K562 (cell line): ENCODE measurements at regions of chr19 and their contacts with region 1.

Region 1: DNA sequence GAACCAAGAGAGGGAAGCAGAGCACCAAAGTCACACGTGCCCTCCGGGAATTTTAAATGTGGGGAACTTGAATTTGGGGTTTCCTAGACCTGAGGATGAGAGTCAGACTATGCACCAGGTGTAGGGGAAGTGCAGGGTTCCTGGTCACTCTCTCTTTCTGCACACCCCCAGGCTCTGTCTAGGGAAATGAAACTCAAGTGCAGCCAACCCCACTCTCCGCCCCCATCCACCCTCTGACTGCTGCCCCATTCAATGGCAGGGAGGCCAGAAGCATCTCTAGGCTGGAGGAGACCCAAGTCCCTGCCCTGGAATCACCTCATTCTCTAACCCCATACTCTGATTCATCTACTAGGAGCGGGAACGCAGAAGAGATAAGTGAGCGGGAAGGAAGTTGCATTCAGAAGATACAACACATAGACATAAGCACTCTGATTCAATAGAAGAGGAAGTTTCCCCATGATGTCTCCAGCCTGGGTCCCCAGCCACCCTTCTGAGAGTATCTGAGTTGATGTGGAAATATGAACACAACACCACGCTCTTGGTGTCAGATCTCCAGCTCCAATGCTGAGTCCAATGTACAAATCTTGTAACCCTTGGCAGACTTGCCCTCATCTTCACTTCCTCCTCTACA is 4.7 kb upstream of the SIGLEC14 start:
- DNase-seq: peak in 1 of 4 experiments; percentile 17
- ATAC-seq: no peak
- H3K4me3 ChIP-seq: no peak overlapping the region
- H3K27ac ChIP-seq: no peak overlapping the region
- H3K4me1 ChIP-seq: peaks cover 0 to 7% of the 10 kb centered on the region in 2 experiments; a peak in 3 of 5 replicates
- H3K27me3 ChIP-seq: peaks cover 9 to 20% of the 10 kb centered on the region in 2 experiments; a peak in 3 of 5 replicates
- CTCF ChIP-seq: no peak
- EP300 ChIP-seq: no peak
- POLR2A ChIP-seq: no peak
- RAD21 ChIP-seq: no peak

Region 2: GRCh38 chr19:51422053-51422448 is 229.3 kb before region 1 on chr19:
- CTCF ChIA-PET with region 1: interaction called, 30 read pairs
- POLR2A ChIA-PET with region 1: no interaction called
- in situ Hi-C with region 1: loop called (anchors 5 kb)
- intact Hi-C with region 1: no loop called
- DNase-seq: peak; percentile 90 to 95 (median 94)
- ATAC-seq: peak; percentile 95
- H3K4me3 ChIP-seq: no peak overlapping the region
- H3K27ac ChIP-seq: no peak overlapping the region
- H3K4me1 ChIP-seq: peaks cover 3 to 23% of the 10 kb centered on the region in 2 experiments
- H3K27me3 ChIP-seq: no peaks in the 10 kb centered on the region
- CTCF ChIP-seq: peak; percentile 96
- EP300 ChIP-seq: peak; percentile 18; the same call in 1 of the 2 replicates
- POLR2A ChIP-seq: no peak
- RAD21 ChIP-seq: peak; percentile 98 to 100

Region 3: DNA sequence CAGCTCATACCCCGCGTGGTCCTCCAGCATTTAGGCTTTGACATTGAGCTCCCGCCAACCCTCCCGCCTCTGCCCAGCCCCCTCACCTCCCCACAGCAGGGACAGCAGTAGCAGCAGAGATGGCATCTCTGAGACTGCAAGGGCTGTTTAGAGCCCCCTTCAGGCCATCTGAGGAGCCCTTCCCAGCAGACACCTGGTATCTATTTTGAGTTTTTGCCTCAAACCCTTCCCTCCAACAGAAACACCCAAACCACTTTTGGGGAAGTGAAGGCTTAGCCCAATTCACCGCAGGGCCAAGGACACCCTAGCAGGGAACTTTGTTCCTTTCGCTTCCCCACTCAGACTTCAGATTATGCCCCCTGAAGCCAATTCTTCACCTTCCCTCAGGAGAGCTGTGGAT is 86.5 kb before region 1 on chr19:
- CTCF ChIA-PET with region 1: no interaction called
- POLR2A ChIA-PET with region 1: no interaction called
- in situ Hi-C with region 1: no loop called
- intact Hi-C with region 1: no loop called
- DNase-seq: peak; percentile 27 to 57 (median 47)
- ATAC-seq: peak; percentile 83
- H3K4me3 ChIP-seq: no peak overlapping the region
- H3K27ac ChIP-seq: peak overlapping the region; percentile 19; the same call in 1 of the 3 replicates
- H3K4me1 ChIP-seq: peaks cover 14 to 51% of the 10 kb centered on the region in 2 experiments; a peak in 4 of 5 replicates
- H3K27me3 ChIP-seq: no peaks in the 10 kb centered on the region
- CTCF ChIP-seq: peak; percentile 61 to 63 (median 63)
- EP300 ChIP-seq: no peak; the same call in 1 of the 2 replicates
- POLR2A ChIP-seq: no peak
- RAD21 ChIP-seq: peak; percentile 7 to 49; a peak in 2 of 4 replicates